Gastrocnemius medialis (tissue), 4 donors: ENCODE measurements at regions of chr19 and their contacts with region 1.

Region 1: GRCh38 chr19:57578487-57579205 is at the start of gene ZNF416:
- DNase-seq: peak; percentile 98
- ATAC-seq: peak; percentile 100
- H3K4me3 ChIP-seq: peak within 1 kb of the TSS; percentile 70 to 89 (median 80)
- H3K27ac ChIP-seq: peak within 1 kb of the TSS; percentile 48 to 81 (median 76)
- H3K4me1 ChIP-seq: peaks cover 14 to 20% of the 10 kb centered on the region in 2 donors
- H3K27me3 ChIP-seq: no peaks in the 10 kb centered on the region
- CTCF ChIP-seq: peak in 2 of 5 experiments; percentile 11 to 40
- POLR2A ChIP-seq: peak in 1 of 2 donors; percentile 20
- total RNA-seq, gene ZNF416: 0.87 to 2.0 (median 1.4) TPM

Region 2: DNA sequence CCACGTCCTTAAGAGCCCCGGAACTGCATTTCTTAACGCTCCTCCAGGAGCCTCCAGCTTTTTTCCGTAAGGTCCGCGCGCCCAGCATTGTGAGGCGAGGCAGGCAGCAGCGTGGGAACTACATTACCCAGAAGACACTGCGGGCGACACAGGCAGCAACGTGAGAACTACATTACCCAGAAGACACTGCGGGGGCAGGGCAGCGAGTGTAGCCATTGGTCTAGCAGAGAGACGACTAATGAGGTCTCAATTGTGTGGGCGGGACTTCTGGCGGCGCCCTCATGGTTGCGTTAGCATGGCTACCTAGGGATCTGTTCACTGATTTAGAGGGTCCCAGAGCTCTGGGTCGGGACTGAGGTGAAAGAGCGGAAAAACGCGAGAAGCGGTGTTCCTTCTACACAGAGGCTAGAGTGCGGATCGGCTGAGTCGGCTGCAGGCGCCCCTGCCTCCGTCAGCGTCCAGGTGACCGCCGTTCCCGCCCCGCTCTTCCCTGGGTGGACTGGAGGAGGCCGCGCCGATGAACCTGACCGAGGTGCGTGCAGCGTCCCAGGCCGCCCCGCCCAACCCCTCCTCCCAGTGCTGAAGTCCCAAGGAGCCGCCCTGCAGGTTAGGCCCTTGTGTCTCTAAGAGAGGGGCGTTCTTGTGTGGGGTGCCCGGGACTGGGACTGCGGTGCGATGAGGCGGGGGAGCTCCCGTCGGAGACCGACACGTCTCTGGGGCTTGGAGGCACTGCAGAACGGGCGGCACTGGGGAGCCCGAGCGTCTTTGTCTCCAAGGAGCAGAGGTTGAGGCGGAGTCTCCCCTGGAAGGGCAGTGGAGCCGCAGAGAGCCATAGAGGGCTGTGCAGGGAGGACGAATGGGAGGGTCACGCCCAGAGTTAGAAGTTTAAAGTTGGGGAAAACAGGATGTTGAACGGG is 143.3 kb before region 1 on chr19 and contains the start of gene ZNF749:
- in situ Hi-C with region 1: no loop called
- intact Hi-C with region 1: loop called (anchors 2 kb)
- DNase-seq: peak; percentile 97 to 99
- ATAC-seq: peak; percentile 100
- H3K4me3 ChIP-seq: peak within 1 kb of the TSS; percentile 87 to 94 (median 90)
- H3K27ac ChIP-seq: peak within 1 kb of the TSS; percentile 70 to 79 (median 75)
- H3K4me1 ChIP-seq: peaks cover 14 to 17% of the 10 kb centered on the region in 2 donors
- H3K27me3 ChIP-seq: no peaks in the 10 kb centered on the region
- CTCF ChIP-seq: no peak
- POLR2A ChIP-seq: no peak
- total RNA-seq, gene ZNF749: 3.1 to 11.4 (median 3.9) TPM

Region 3: DNA sequence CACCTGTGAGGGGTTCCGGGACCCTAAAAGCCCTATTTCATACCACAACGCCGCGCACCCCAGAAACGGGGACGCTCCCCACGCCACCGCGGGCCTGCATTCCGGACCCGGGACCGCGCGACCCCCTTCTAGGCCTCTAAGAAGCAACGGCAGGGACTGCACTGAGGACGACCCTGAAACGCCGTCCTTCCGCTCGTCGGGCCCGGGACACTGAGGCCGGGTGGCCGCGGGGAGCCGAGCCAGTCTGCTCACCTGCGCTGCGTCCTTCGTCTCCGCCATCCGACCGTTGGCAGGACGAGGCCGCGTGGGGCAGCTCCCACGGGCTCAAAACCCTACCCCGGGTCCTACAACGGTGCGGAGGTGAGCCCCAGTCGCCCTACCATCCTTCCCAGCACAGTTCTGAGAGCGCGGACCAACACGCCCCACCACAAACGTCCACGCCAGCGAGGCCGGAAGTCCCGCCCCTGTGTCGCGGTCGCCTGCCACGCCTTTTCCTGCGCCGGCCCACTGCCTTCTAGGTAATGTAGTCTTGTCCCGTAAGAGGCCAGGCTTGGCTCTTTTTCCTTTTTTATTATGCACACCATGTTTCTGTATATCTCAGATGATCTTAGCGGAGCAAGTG is 19.1 kb before region 1 on chr19 and contains the start of gene ZNF550:
- in situ Hi-C with region 1: no loop called
- intact Hi-C with region 1: loop called (anchors 1 kb)
- DNase-seq: peak; percentile 82 to 88
- ATAC-seq: peak; percentile 96 to 98
- H3K4me3 ChIP-seq: peak within 1 kb of the TSS; percentile 82 to 96 (median 90)
- H3K27ac ChIP-seq: peak within 1 kb of the TSS; percentile 69 to 86 (median 74)
- H3K4me1 ChIP-seq: peaks cover 16 to 26% of the 10 kb centered on the region in 2 donors
- H3K27me3 ChIP-seq: no peaks in the 10 kb centered on the region
- CTCF ChIP-seq: no peak
- POLR2A ChIP-seq: peak in 1 of 2 donors; percentile 51
- total RNA-seq, gene ZNF550: 0.87 to 9.1 (median 2.6) TPM

Region 4: DNA sequence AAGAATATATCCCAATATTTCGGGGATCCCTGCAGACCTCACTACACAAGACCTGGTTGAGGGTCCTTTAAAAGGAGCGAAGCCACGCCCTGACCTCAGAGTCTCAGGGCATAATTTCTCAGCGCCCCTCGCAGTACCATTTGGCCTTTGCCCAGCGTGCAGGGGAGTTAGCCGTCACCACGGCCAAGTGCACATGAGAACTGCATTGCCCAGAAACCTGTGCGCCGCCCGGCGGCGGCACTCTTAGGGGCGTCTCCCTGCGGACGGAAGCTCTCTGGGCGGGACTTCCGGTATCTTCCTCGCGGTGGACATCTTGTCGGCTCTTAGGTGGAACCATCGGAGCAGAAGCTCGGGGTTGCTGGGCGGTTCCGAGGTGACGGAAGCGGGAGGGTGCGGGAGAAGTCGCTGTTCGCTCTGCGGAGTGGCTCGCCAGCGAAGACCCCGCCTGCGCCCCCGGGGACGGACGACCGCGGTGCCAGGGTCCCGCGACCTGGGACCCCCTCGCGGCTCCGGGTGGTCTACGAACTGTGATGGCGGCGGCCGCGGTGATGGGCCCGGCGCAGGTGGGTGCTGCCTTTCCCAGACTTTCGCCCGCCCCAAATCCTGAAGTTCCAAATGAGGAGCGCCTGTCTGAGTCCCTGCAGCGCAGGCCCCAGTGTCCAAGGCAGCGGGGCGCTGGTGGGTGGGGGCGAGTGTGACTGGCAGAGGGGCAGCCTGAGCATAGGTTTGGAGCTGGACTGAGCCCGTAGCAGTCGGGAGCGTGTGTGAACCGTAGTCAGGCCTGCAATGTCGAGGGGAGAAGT is 35.5 kb after region 1 on chr19 and contains the start of gene ZNF134:
- in situ Hi-C with region 1: no loop called
- intact Hi-C with region 1: loop called (anchors 1 kb)
- DNase-seq: peak; percentile 82 to 86
- ATAC-seq: peak; percentile 98 to 99
- H3K4me3 ChIP-seq: peak within 1 kb of the TSS; percentile 79 to 98 (median 90)
- H3K27ac ChIP-seq: peak within 1 kb of the TSS; percentile 72 to 85 (median 80)
- H3K4me1 ChIP-seq: peaks cover 14 to 16% of the 10 kb centered on the region in 2 donors
- H3K27me3 ChIP-seq: peaks cover 0 to 3% (median 0%) of the 10 kb centered on the region in 3 donors
- CTCF ChIP-seq: peak in 3 of 5 experiments; percentile 21 to 41 (median 25)
- POLR2A ChIP-seq: peak in 1 of 2 donors; percentile 36
- total RNA-seq, gene ZNF134: 4.2 to 13.1 (median 8.0) TPM

Region 5: DNA sequence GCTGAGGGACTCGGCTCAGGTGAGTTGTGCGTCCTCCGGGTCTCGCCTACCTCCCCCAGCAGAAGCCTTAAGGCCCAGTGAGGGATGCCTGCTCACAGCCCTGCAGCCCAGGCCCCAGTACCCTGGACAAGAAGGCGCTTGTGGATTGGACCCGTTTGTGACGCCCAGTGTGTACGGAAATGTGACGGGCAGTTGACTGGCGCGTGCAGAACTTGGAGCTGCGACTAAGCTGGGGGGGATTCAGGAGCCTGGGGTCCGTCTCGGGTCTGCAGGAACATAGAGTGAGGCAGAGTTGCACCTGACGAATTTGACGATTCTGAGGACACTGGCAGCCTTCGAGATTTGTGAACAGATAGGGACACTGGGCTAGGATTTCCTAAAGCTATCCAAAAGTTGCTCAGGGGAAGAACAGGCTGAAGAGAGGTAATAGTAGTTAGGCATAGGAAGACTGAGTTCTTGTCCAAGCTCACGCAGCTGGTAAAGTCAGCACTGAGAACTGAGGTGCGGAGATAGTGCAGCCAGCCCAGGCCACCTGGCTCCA is 103.7 kb after region 1 on chr19:
- in situ Hi-C with region 1: no loop called
- intact Hi-C with region 1: loop called (anchors 2 kb)
- DNase-seq: no peak
- ATAC-seq: peak; percentile 22 to 27
- H3K4me3 ChIP-seq: peak overlapping the region; percentile 74 to 99 (median 88)
- H3K27ac ChIP-seq: peak overlapping the region; percentile 55 to 82 (median 68)
- H3K4me1 ChIP-seq: peaks cover 10 to 14% of the 10 kb centered on the region in 2 donors
- H3K27me3 ChIP-seq: no peaks in the 10 kb centered on the region
- CTCF ChIP-seq: no peak
- POLR2A ChIP-seq: no peak

Region 6: GRCh38 chr19:57947208-57948134 is 368.8 kb after region 1 on chr19 and contains the start of gene ZNF256:
- in situ Hi-C with region 1: no loop called
- intact Hi-C with region 1: loop called (anchors 5 kb)
- DNase-seq: peak; percentile 87 to 95
- ATAC-seq: peak; percentile 96 to 99
- H3K4me3 ChIP-seq: peak within 1 kb of the TSS; percentile 77 to 99 (median 93)
- H3K27ac ChIP-seq: peak within 1 kb of the TSS; percentile 78 to 88 (median 85)
- H3K4me1 ChIP-seq: peaks cover 7 to 8% of the 10 kb centered on the region in 2 donors
- H3K27me3 ChIP-seq: no peaks in the 10 kb centered on the region
- CTCF ChIP-seq: peak; percentile 32 to 67 (median 62)
- POLR2A ChIP-seq: peak in 1 of 2 donors; percentile 25
- total RNA-seq, gene ZNF256: 0.93 to 2.6 (median 1.4) TPM